T-cell (primary cell): ENCODE measurements at regions of chr12 and their contacts with region 1.

Region 1: GRCh38 chr12:120388691-120389481 is 19.9 kb upstream of the MSI1 start:
- DNase-seq: no peak
- ATAC-seq: no peak
- H3K4me3 ChIP-seq: no peak overlapping the region
- H3K4me3 Mint-ChIP-seq: no peak overlapping the region
- H3K27ac ChIP-seq: no peak overlapping the region
- H3K27ac Mint-ChIP-seq: no peak overlapping the region
- H3K4me1 ChIP-seq: peaks cover 0 to 7% of the 10 kb centered on the region in 2 experiments
- H3K4me1 Mint-ChIP-seq: peaks cover 0 to 6% (median 4%) of the 10 kb centered on the region in 3 donors
- H3K27me3 ChIP-seq: peaks cover 5 to 51% of the 10 kb centered on the region in 2 experiments
- H3K27me3 Mint-ChIP-seq: peaks cover 34 to 50% of the 10 kb centered on the region in 2 donors

Region 2: GRCh38 chr12:120332041-120332440 is 56.8 kb before region 1 on chr12:
- CTCF ChIA-PET with region 1: no interaction called
- POLR2A ChIA-PET with region 1: no interaction called
- DNase-seq: no peak
- ATAC-seq: no peak
- H3K4me3 ChIP-seq: no peak overlapping the region
- H3K4me3 Mint-ChIP-seq: no peak overlapping the region
- H3K27ac ChIP-seq: no peak overlapping the region
- H3K27ac Mint-ChIP-seq: no peak overlapping the region
- H3K4me1 ChIP-seq: no peaks in the 10 kb centered on the region
- H3K4me1 Mint-ChIP-seq: no peaks in the 10 kb centered on the region
- H3K27me3 ChIP-seq: peaks cover 0 to 18% of the 10 kb centered on the region in 2 experiments
- H3K27me3 Mint-ChIP-seq: peaks cover 6 to 7% of the 10 kb centered on the region in 2 donors

Region 3: GRCh38 chr12:120367924-120368788 is 20.7 kb before region 1 on chr12:
- CTCF ChIA-PET with region 1: no interaction called
- POLR2A ChIA-PET with region 1: interaction called in 1 of 2 experiments, 14 read pairs
- DNase-seq: no peak
- ATAC-seq: peak in 2 of 4 experiments; percentile 16 to 27
- H3K4me3 ChIP-seq: no peak overlapping the region
- H3K4me3 Mint-ChIP-seq: peak overlapping the region; percentile 41 to 60 (median 50)
- H3K27ac ChIP-seq: no peak overlapping the region
- H3K27ac Mint-ChIP-seq: no peak overlapping the region
- H3K4me1 ChIP-seq: peaks cover 0 to 18% of the 10 kb centered on the region in 2 experiments
- H3K4me1 Mint-ChIP-seq: peaks cover 14 to 24% (median 19%) of the 10 kb centered on the region in 3 donors
- H3K27me3 ChIP-seq: peaks cover 32 to 70% of the 10 kb centered on the region in 2 experiments
- H3K27me3 Mint-ChIP-seq: peaks cover 72 to 80% of the 10 kb centered on the region in 2 donors

Region 4: GRCh38 chr12:121568971-121569751 is 1180.3 kb after region 1 on chr12:
- CTCF ChIA-PET with region 1: no interaction called
- POLR2A ChIA-PET with region 1: no interaction called
- DNase-seq: no peak
- ATAC-seq: no peak
- H3K4me3 ChIP-seq: no peak overlapping the region
- H3K4me3 Mint-ChIP-seq: no peak overlapping the region
- H3K27ac ChIP-seq: no peak overlapping the region
- H3K27ac Mint-ChIP-seq: peak overlapping the region in 1 of 2 donors; percentile 22
- H3K4me1 ChIP-seq: peaks cover 2 to 4% of the 10 kb centered on the region in 2 experiments
- H3K4me1 Mint-ChIP-seq: peaks cover 25 to 31% (median 25%) of the 10 kb centered on the region in 3 donors
- H3K27me3 ChIP-seq: no peaks in the 10 kb centered on the region
- H3K27me3 Mint-ChIP-seq: no peaks in the 10 kb centered on the region